Activated CD4-positive, alpha-beta memory T cell treated with anti-CD3 and anti-CD28 coated beads for 36 hours (primary cell): ENCODE measurements at regions of chr12 and their contacts with region 1.

Region 1: DNA sequence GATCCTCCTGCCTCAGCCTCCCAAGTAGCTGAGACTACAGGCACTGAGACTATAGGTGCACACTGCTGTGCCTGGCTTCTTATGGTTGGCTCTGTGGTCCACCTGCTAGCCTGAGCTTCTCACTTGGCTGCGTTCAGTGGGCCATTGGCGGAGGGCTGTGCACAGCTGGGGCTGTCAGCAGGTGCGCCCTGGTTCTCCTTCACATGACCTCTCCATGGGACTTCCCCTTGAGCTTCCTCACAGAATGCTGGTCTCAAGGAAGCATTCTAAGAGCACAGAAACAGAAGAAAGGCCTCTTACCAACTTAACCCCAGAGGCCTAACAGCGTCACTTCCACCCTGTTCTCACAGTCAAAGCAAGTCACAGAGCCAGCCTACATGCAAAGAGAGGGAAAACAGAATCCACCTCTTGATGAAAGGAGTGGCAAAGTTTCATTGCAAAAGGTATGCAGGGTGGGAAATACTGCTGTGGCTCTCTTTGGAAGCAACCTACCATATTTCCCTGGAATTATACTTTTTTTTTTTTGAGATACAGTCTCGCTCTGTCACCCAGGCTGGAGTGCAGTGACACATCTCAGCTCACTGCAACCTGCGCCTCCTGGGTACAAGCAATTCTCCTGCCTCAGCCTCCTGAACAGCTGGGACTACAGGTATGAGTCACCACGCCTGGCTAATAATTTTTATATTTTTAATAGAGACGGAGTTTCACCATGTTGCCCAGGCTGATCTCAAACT is 9.3 kb downstream of the RILPL2 start:
- DNase-seq: peak; percentile 64
- H3K4me3 Mint-ChIP-seq: peak overlapping the region; percentile 54
- H3K27ac Mint-ChIP-seq: peak overlapping the region; percentile 92
- H3K4me1 Mint-ChIP-seq: peaks cover 31% of the 10 kb centered on the region
- H3K27me3 Mint-ChIP-seq: no peaks in the 10 kb centered on the region

Region 2: DNA sequence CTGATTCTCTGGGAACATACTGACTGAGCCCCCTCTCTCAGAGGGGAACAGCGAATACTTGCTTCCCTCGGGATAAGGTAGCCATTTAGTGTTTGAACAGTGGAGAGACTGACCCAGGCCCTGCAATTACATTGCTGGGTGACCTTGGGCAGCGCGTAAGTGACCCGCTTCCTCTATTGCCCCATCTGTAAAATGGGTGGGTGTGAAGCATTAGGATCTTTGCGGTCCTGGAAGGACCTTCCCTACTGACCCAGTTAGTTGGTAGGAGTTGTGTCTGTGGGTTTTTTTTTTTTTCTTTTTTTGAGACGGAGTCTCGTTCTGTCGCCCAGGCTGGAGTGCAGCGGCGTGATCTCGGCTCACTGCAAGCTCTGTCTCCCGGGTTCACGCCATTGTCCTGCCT is 44.5 kb before region 1 on chr12:
- CTCF ChIA-PET with region 1: interaction called, 3 read pairs
- POLR2A ChIA-PET with region 1: interaction called, 6 read pairs
- intact Hi-C with region 1: loop called (anchors 1 kb)
- DNase-seq: no peak
- H3K4me3 Mint-ChIP-seq: peak overlapping the region; percentile 63
- H3K27ac Mint-ChIP-seq: no peak overlapping the region
- H3K4me1 Mint-ChIP-seq: peaks cover 13% of the 10 kb centered on the region
- H3K27me3 Mint-ChIP-seq: no peaks in the 10 kb centered on the region

Region 3: DNA sequence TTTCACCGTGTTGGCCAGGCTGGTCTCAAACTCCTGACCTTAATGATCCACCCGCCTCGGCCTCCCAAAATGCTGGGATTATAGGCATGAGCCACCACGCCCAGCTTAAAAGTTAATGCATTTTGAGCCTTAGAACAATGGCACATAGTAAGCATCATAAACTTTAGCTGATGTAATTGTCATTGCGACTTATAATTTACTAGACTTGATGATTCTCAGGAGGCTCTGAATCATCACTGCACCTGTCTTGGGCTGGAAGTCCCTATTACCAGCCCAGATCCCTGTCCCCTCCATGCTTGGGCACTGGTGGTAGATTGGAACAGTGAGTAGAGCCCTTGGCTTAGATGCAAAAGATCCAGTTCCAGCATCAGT is 17.2 kb before region 1 on chr12:
- CTCF ChIA-PET with region 1: no interaction called
- POLR2A ChIA-PET with region 1: no interaction called
- intact Hi-C with region 1: no loop called
- DNase-seq: no peak
- H3K4me3 Mint-ChIP-seq: no peak overlapping the region
- H3K27ac Mint-ChIP-seq: peak overlapping the region; percentile 65
- H3K4me1 Mint-ChIP-seq: no peaks in the 10 kb centered on the region
- H3K27me3 Mint-ChIP-seq: no peaks in the 10 kb centered on the region

Region 4: GRCh38 chr12:123445388-123446351 is 18.5 kb after region 1 on chr12:
- CTCF ChIA-PET with region 1: interaction called, 4 read pairs
- POLR2A ChIA-PET with region 1: interaction called, 14 read pairs
- intact Hi-C with region 1: loop called (anchors 1 kb)
- DNase-seq: no peak
- H3K4me3 Mint-ChIP-seq: no peak overlapping the region
- H3K27ac Mint-ChIP-seq: peak overlapping the region; percentile 67
- H3K4me1 Mint-ChIP-seq: peaks cover 36% of the 10 kb centered on the region
- H3K27me3 Mint-ChIP-seq: no peaks in the 10 kb centered on the region